ENCODE measurements at regions of chr19 and their contacts with region 1.

Region 1: DNA sequence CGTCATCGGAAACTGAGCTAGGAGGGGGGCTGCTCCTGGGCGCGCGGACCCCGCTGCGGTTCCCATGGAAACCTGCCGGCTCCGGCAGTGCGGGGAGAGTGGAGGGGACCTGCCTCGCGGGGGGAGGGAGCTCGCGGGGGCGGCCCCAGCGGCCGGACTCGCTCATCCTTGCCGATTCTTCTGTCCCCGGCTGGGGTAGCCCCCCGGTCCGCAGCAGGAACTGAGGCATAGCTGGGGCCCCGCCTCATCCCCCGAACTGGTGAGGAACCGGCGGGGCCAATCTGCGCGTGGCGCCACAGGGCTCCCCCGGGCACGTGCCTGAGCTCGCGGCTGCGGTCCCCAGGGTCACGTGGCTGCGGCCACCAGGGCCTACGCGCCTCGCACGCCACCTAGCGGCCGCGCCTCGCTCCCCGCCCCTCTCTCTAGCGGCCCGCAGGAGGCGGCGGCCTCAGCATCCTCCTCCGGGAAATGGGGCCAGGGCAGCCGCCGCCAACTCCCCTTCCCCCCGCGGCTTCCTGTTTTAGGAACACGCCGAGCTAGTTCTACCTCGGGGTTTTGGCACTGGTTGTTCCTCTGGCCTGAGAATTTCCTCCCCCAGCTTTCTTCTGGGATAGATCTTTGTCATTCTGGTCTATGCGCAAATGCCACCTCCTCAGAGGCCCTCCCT is 1.7 kb upstream of the ELAVL3 start:
- DNase-seq: peak; percentile 84
- H3K4me3 Mint-ChIP-seq: peak overlapping the region; percentile 81
- H3K27ac Mint-ChIP-seq: peak overlapping the region; percentile 85
- H3K4me1 Mint-ChIP-seq: peaks cover 17% of the 10 kb centered on the region
- H3K27me3 Mint-ChIP-seq: peaks cover 28% of the 10 kb centered on the region

Region 2: DNA sequence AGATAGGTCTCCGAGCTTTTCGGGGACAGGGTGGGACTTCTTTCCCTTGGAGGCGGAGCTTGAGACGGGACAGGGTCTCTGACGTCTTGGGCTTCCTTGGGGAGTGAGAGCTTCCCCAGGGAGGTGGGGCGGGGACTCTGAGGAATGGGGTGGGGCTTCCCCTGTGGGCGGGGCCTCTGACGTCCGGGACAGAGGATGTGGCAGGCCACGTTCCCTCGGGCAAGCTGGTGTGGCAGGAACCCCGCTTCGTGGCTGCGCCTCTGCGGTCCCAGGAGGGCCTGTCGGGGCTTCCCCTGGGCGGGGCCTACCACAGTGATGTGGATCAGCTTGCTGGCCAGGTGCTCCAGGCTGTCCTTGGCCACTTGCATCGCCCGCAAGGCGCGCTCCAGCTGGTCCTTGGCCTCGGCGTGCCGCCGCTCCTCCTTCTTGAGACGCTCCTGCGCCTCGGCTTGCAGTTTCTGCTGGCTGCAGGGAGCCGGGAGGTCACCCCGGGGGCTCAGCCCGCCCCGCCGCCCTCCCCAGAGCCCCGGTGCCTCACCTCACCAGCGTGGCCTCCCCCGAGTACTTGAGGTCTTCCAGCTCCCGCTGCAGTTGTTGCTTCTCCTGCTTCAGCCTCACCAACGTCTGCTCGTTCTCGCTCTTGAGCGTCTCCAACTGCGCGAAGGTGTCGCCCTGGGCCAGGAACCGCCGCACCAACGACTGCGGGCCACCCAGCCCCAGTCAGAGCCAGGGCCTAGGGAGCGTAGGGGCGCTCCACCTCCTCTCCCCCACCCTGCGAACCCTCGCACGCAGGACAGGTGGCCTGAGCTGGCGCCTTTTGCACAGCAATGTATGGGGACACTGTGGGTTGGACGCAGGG is 60.1 kb before region 1 on chr19:
- intact Hi-C with region 1: loop called (anchors 5 kb)
- DNase-seq: peak; percentile 73
- H3K4me3 Mint-ChIP-seq: peak overlapping the region; percentile 68
- H3K27ac Mint-ChIP-seq: no peak overlapping the region
- H3K4me1 Mint-ChIP-seq: peaks cover 19% of the 10 kb centered on the region
- H3K27me3 Mint-ChIP-seq: peaks cover 47% of the 10 kb centered on the region

Region 3: GRCh38 chr19:11460207-11460606 is 22.3 kb before region 1 on chr19:
- intact Hi-C with region 1: no loop called
- DNase-seq: no peak
- H3K4me3 Mint-ChIP-seq: no peak overlapping the region
- H3K27ac Mint-ChIP-seq: no peak overlapping the region
- H3K4me1 Mint-ChIP-seq: no peaks in the 10 kb centered on the region
- H3K27me3 Mint-ChIP-seq: no peaks in the 10 kb centered on the region